ENCODE measurements at regions of chr2 and their contacts with region 1.

Region 1: GRCh38 chr2:159009940-159010339 is 41.5 kb downstream of the TANC1 start:
- DNase-seq: no peak
- H3K4me3 Mint-ChIP-seq: no peak overlapping the region
- H3K27ac Mint-ChIP-seq: no peak overlapping the region
- H3K4me1 Mint-ChIP-seq: no peaks in the 10 kb centered on the region
- H3K27me3 Mint-ChIP-seq: no peaks in the 10 kb centered on the region

Region 2: GRCh38 chr2:158953926-158954763 is 55.8 kb before region 1 on chr2:
- intact Hi-C with region 1: no loop called
- DNase-seq: no peak
- H3K4me3 Mint-ChIP-seq: no peak overlapping the region
- H3K27ac Mint-ChIP-seq: peak overlapping the region; percentile 21
- H3K4me1 Mint-ChIP-seq: peaks cover 7% of the 10 kb centered on the region
- H3K27me3 Mint-ChIP-seq: peaks cover 11% of the 10 kb centered on the region

Region 3: GRCh38 chr2:159640176-159640575 is 630.2 kb after region 1 on chr2:
- intact Hi-C with region 1: loop called (anchors 5 kb)
- DNase-seq: no peak
- H3K4me3 Mint-ChIP-seq: no peak overlapping the region
- H3K27ac Mint-ChIP-seq: no peak overlapping the region
- H3K4me1 Mint-ChIP-seq: no peaks in the 10 kb centered on the region
- H3K27me3 Mint-ChIP-seq: peaks cover 3% of the 10 kb centered on the region